WTC11 (cell line): ENCODE measurements at regions of chr1 and their contacts with region 1.

Region 1: GRCh38 chr1:44213222-44214112 is at the start of gene DMAP1:
- DNase-seq: peak; percentile 83
- ATAC-seq: peak; percentile 85
- H3K4me3 Mint-ChIP-seq: peak within 1 kb of the TSS; percentile 96
- H3K27ac Mint-ChIP-seq: no peak within 1 kb of the TSS
- H3K4me1 Mint-ChIP-seq: peaks cover 9% of the 10 kb centered on the region
- H3K27me3 Mint-ChIP-seq: peaks cover 18% of the 10 kb centered on the region
- CTCF ChIP-seq: no peak
- total RNA-seq, gene DMAP1: 40.9 to 44.4 TPM (median 42.3 TPM) in 3 replicates

Region 2: DNA sequence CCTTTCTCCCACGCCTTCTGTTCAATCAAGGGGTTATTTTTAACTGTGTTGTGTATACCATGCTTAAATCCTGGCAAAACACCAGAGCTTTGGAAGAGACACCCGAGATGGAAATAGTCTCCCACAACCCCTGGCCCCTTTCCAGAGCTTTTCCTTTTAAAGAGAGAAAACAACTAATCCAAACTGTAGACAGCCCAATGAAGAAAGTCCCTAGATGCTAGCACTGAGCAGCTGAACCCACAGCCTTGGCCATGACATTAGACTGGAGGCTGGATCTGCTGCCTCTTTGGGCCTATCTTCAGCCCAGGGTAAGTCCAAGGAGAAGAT is 344.8 kb before region 1 on chr1:
- CTCF ChIA-PET with region 1: no interaction called
- POLR2A ChIA-PET with region 1: no interaction called
- DNase-seq: no peak
- ATAC-seq: no peak
- H3K4me3 Mint-ChIP-seq: no peak overlapping the region
- H3K27ac Mint-ChIP-seq: no peak overlapping the region
- H3K4me1 Mint-ChIP-seq: no peaks in the 10 kb centered on the region
- H3K27me3 Mint-ChIP-seq: no peaks in the 10 kb centered on the region; the same call in none of the 2 replicates
- CTCF ChIP-seq: no peak

Region 3: GRCh38 chr1:44089371-44090049 is 124.0 kb before region 1 on chr1:
- CTCF ChIA-PET with region 1: interaction called, 19 read pairs
- POLR2A ChIA-PET with region 1: no interaction called
- DNase-seq: peak; percentile 21
- ATAC-seq: peak; percentile 43
- H3K4me3 Mint-ChIP-seq: no peak overlapping the region
- H3K27ac Mint-ChIP-seq: no peak overlapping the region
- H3K4me1 Mint-ChIP-seq: peaks cover 26% of the 10 kb centered on the region
- H3K27me3 Mint-ChIP-seq: peaks cover 5% of the 10 kb centered on the region; the same call in 1 of the 2 replicates
- CTCF ChIP-seq: no peak

Region 4: DNA sequence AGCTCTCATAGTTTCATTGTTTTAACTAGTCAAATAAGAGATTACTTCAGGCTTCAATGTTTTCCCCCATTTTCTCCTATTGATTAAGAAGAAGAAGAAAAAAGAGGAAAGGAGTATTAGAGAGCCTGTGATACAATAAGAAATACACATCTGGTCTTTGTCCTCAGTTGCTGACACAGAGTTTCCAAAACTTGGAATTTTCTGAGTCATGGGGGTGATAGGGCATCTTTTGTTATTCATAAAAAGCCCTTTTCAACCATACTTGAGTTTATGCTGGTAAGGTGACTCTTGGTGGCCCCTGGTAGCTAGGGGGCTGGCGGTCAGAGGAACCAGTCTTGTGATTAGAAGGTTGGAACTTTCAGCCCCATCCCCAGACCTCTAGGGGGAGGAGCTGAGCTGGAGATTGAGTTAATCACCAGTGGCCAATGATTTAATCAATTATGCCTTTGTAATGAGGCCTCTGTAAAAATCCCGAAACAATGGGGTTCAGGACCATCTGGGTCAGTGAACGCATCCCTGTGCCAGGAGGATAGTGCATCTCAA is 43.1 kb before region 1 on chr1:
- CTCF ChIA-PET with region 1: interaction called, 11 read pairs
- POLR2A ChIA-PET with region 1: no interaction called
- DNase-seq: no peak
- ATAC-seq: peak; percentile 52
- H3K4me3 Mint-ChIP-seq: no peak overlapping the region
- H3K27ac Mint-ChIP-seq: no peak overlapping the region
- H3K4me1 Mint-ChIP-seq: no peaks in the 10 kb centered on the region
- H3K27me3 Mint-ChIP-seq: peaks cover 15% of the 10 kb centered on the region
- CTCF ChIP-seq: no peak

Region 5: DNA sequence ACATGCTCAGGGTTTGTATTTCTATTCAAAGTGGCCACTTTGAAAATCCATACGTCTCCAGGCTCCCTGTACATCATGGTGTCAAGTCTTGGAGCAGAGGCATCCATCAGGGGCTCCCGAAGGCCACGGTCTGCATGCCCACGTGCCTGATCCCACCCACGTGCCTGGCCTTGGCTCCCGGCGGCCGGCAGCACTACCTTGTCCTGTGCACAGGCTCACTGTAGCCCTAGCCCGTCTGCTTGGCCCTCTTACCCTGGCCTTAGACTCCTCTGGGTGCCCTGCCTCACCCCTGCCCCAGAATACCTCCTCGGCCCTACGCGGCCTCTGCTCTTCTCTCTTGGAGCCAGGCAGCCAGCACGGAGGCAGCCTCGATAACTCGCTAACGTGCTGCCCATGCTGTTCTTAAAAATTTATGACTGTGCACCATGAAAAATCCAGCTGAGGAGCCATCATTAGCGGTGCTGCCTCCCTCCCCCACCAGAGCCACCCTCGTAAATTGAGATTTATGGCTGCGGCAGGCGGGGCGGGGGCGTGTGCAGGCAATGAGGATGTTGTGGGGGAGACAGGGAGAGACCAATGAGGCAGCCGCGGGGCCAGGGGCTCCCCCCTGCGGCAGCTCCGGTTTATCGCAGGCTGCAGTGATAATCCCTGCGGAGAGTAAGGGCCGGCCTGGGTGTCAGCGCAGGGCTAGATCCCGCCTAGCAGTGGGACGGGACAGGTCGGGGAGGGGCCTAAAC is 24.4 kb after region 1 on chr1:
- CTCF ChIA-PET with region 1: interaction called, 12 read pairs
- POLR2A ChIA-PET with region 1: interaction called, 3 read pairs
- DNase-seq: peak; percentile 89
- ATAC-seq: peak; percentile 98
- H3K4me3 Mint-ChIP-seq: peak overlapping the region; percentile 44
- H3K27ac Mint-ChIP-seq: peak overlapping the region; percentile 46
- H3K4me1 Mint-ChIP-seq: peaks cover 36% of the 10 kb centered on the region
- H3K27me3 Mint-ChIP-seq: no peaks in the 10 kb centered on the region
- CTCF ChIP-seq: peak; percentile 39; the same call in 1 of the 2 replicates

Region 6: GRCh38 chr1:44328671-44329416 is 115.4 kb after region 1 on chr1:
- CTCF ChIA-PET with region 1: no interaction called
- POLR2A ChIA-PET with region 1: no interaction called
- DNase-seq: no peak
- ATAC-seq: no peak
- H3K4me3 Mint-ChIP-seq: no peak overlapping the region
- H3K27ac Mint-ChIP-seq: no peak overlapping the region
- H3K4me1 Mint-ChIP-seq: peaks cover 32% of the 10 kb centered on the region
- H3K27me3 Mint-ChIP-seq: no peaks in the 10 kb centered on the region
- CTCF ChIP-seq: no peak

Region 7: DNA sequence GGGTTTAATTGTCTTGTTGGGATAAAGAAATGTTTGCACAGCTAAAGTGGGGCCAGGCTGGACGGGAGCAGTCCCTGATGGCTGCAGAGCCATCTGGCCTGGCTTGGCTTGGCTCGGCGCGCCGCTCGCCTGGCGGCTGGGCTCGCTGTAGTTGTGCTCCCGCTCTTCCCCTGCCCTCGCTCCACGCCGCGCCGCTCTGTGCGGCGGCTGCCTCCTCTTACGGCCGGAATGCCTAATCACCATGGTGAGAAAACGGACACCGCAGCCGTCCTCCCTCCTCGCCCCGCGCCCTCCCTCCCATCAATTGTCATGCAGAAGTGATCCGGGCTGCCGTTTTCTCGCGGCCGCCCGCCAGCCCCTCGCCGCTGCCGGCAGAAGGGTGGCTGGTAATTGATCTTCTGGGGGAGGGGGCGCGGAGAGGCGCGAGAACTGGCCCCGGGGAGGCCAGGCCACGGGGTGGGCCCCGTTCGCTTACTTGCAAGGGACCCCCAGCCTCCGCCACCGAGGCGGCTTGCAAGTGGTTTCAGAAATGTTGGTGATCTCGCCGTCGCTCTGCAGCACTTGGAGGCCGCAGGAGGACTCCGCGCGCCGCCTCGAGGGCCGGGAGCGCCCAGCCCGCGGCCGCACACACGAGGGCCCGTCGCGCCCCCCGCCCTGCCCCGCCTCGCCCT is 204.0 kb after region 1 on chr1:
- CTCF ChIA-PET with region 1: no interaction called
- POLR2A ChIA-PET with region 1: no interaction called
- DNase-seq: peak; percentile 93
- ATAC-seq: peak; percentile 92
- H3K4me3 Mint-ChIP-seq: peak overlapping the region; percentile 84
- H3K27ac Mint-ChIP-seq: peak overlapping the region; percentile 89
- H3K4me1 Mint-ChIP-seq: peaks cover 53% of the 10 kb centered on the region
- H3K27me3 Mint-ChIP-seq: peaks cover 27% of the 10 kb centered on the region
- CTCF ChIP-seq: no peak